ENCODE measurements at regions of chr2 and their contacts with region 1.

Region 1: GRCh38 chr2:166539340-166540162 is 45.5 kb upstream of the SCN7A start:
- DNase-seq: no peak
- ATAC-seq: peak; percentile 83

Region 2: DNA sequence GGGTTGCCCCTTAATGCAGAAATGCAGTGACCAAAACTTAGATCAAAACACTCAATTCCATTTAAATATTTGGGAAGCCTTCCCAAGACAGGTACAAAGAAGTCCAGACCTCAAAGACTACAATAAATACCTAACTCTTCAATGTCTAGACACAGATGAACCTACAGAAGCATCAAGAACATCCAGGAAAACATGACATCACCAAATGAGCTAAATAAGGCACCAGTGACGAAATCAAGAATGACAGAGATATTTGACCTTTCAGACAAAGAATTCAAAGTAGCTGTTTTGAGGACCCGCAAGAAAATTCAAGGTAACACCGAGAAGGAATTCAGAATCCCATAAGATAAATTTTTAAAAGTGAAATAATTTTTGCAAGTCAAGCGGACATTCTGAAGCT is 489.0 kb after region 1 on chr2:
- intact Hi-C with region 1: no loop called
- DNase-seq: no peak
- ATAC-seq: no peak

Region 3: GRCh38 chr2:168118733-168119514 is 1579.4 kb after region 1 on chr2:
- intact Hi-C with region 1: loop called (anchors 10 kb)
- DNase-seq: no peak
- ATAC-seq: peak; percentile 87